Gastrocnemius medialis (tissue), 4 donors: ENCODE measurements at regions of chr10 and their contacts with region 1.

Region 1: DNA sequence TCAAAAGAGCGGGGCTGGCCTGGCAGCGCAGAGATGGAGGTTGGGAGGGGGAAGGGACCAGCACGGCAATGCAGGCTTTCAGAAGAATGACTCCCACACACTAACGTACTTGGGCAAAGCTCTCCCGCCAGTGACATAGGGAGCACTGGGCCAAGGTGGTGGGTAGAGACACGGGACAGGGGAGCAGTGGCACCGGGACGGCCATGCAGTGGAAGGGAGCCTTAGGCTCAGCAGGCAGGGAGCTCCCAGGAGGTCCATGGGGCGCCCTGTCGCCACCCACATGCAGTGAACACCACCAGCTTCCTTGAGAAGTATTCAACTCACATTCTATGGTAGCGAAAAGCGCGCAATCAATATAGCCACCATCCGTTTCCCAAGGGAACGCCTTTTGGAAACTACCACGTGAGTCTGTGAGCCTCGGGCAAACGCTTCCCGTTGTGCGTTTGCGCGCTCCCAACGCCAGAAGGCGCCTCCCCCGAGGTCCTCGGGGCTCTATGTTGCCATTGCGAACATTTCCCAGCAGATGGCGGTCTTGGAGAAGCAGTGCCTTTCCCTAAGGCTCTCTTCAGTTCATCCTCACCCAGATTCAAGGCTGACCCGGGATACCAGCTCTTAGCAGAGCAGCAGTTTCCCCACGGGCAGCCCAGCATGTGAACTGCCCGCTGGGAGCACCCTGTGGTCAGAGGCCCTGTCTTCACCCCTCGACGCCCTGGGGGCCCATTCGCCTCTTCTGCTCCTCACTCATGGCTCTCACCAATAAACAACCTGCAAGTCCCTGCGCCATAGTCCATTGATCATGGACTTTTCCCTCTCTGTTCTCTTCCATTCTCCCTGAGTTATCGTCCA is 16.4 kb upstream of the OPALIN start:
- DNase-seq: peak; percentile 61 to 77
- ATAC-seq: peak; percentile 97
- H3K4me3 ChIP-seq: peak overlapping the region; percentile 38 to 71 (median 52)
- H3K27ac ChIP-seq: no peak overlapping the region
- H3K4me1 ChIP-seq: peaks cover 0 to 6% of the 10 kb centered on the region in 2 donors
- H3K27me3 ChIP-seq: no peaks in the 10 kb centered on the region
- CTCF ChIP-seq: peak; percentile 74 to 95 (median 85)
- POLR2A ChIP-seq: no peak

Region 2: DNA sequence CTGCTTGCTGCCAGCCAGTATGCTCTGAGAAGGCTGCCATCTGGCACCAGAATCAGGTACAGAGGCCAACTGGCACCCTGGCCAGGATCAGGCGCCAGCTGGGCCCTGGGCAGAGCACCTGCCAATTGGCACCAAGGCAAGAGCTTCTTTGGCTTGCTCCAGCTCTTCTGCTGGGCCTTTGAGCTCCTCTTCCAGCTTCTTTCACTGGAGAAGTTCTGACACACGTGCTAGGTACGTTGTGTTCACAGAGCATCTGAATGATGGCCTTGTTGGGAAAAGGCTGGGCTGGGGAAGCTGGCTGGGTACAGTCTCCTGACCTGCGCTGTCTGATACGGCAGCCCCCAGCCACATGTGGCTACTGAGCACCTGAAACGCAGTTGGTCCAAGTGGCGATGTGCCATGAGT is 15.3 kb after region 1 on chr10:
- in situ Hi-C with region 1: no loop called
- intact Hi-C with region 1: loop called (anchors 2 kb)
- DNase-seq: peak; percentile 77 to 92
- ATAC-seq: peak; percentile 98 to 100
- H3K4me3 ChIP-seq: no peak overlapping the region
- H3K27ac ChIP-seq: peak overlapping the region in 3 of 4 donors; percentile 42 to 64 (median 53)
- H3K4me1 ChIP-seq: peaks cover 8 to 16% of the 10 kb centered on the region in 2 donors
- H3K27me3 ChIP-seq: no peaks in the 10 kb centered on the region
- CTCF ChIP-seq: no peak
- POLR2A ChIP-seq: no peak

Region 3: DNA sequence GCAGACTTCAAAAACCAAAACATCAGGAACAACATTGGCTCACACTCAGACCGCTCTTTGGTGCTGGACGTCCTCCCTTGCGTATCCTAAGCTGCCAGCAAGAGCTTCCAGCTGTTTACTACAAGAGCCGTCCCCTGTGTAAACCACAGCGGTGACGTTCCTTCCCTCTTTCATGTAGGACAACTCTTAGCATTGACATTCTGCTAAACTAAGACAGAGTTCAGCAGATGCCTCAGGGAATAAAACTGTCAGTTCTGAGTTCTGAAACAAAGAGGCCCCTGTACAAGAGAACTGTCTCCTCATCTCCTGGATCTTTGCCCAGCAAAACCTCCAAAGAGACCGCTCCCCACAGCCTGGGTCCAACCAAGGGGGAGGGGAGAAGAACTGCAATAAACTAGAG is 41.4 kb after region 1 on chr10:
- in situ Hi-C with region 1: no loop called
- intact Hi-C with region 1: no loop called
- DNase-seq: peak; percentile 38 to 57
- ATAC-seq: peak; percentile 78 to 81
- H3K4me3 ChIP-seq: no peak overlapping the region
- H3K27ac ChIP-seq: no peak overlapping the region
- H3K4me1 ChIP-seq: peaks cover 8 to 14% of the 10 kb centered on the region in 2 donors
- H3K27me3 ChIP-seq: peaks cover 0 to 4% (median 2%) of the 10 kb centered on the region in 3 donors
- CTCF ChIP-seq: no peak
- POLR2A ChIP-seq: no peak

Region 4: GRCh38 chr10:96470116-96470743 is 95.0 kb after region 1 on chr10:
- in situ Hi-C with region 1: no loop called
- intact Hi-C with region 1: no loop called
- DNase-seq: no peak
- ATAC-seq: peak in 1 of 2 donors; percentile 39
- H3K4me3 ChIP-seq: no peak overlapping the region
- H3K27ac ChIP-seq: no peak overlapping the region
- H3K4me1 ChIP-seq: no peaks in the 10 kb centered on the region
- H3K27me3 ChIP-seq: no peaks in the 10 kb centered on the region
- CTCF ChIP-seq: peak in 3 of 5 experiments; percentile 12 to 36 (median 27)
- POLR2A ChIP-seq: no peak

Region 5: GRCh38 chr10:96513698-96514561 is 138.7 kb after region 1 on chr10 and contains the start of gene TLL2:
- in situ Hi-C with region 1: loop called in 2 of 4 experiments (anchors 10 to 25 kb)
- intact Hi-C with region 1: loop called (anchors 1 kb)
- DNase-seq: peak; percentile 76 to 81
- ATAC-seq: peak; percentile 84 to 88
- H3K4me3 ChIP-seq: peak within 1 kb of the TSS; percentile 61 to 73 (median 66)
- H3K27ac ChIP-seq: peak within 1 kb of the TSS; percentile 39 to 61 (median 58)
- H3K4me1 ChIP-seq: peaks cover 13 to 26% of the 10 kb centered on the region in 2 donors
- H3K27me3 ChIP-seq: no peaks in the 10 kb centered on the region
- CTCF ChIP-seq: peak; percentile 59 to 87 (median 85)
- POLR2A ChIP-seq: peak in 1 of 2 donors; percentile 56
- total RNA-seq, gene TLL2: 0.10 to 1.0 (median 0.44) TPM in 3 of 4 donors, not detected in the other

Region 6: DNA sequence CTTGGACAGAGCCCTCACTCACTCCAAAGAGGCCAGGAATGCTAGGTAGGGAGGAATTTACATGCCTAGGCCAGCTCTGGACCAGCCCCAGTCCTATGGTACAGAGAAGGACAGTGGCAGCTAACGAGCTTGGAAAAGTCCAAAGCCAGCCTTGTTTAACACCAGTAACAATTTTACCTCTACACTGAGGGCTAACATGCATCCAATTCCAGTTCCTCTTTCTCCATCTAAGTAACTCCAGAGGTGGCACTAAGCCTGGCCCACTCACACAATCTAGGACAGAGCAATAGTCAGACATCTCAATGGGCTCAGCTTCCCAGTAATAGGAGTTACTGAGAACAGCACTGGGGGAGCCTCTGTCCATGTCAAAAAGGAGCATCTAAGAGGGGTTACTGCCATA is 451.2 kb after region 1 on chr10:
- in situ Hi-C with region 1: loop called in 1 of 4 experiments (anchors 10 kb)
- intact Hi-C with region 1: loop called (anchors 5 kb)
- DNase-seq: no peak
- ATAC-seq: no peak
- H3K4me3 ChIP-seq: no peak overlapping the region
- H3K27ac ChIP-seq: no peak overlapping the region
- H3K4me1 ChIP-seq: peaks cover 4 to 7% of the 10 kb centered on the region in 2 donors
- H3K27me3 ChIP-seq: no peaks in the 10 kb centered on the region
- CTCF ChIP-seq: no peak
- POLR2A ChIP-seq: no peak

Region 7: DNA sequence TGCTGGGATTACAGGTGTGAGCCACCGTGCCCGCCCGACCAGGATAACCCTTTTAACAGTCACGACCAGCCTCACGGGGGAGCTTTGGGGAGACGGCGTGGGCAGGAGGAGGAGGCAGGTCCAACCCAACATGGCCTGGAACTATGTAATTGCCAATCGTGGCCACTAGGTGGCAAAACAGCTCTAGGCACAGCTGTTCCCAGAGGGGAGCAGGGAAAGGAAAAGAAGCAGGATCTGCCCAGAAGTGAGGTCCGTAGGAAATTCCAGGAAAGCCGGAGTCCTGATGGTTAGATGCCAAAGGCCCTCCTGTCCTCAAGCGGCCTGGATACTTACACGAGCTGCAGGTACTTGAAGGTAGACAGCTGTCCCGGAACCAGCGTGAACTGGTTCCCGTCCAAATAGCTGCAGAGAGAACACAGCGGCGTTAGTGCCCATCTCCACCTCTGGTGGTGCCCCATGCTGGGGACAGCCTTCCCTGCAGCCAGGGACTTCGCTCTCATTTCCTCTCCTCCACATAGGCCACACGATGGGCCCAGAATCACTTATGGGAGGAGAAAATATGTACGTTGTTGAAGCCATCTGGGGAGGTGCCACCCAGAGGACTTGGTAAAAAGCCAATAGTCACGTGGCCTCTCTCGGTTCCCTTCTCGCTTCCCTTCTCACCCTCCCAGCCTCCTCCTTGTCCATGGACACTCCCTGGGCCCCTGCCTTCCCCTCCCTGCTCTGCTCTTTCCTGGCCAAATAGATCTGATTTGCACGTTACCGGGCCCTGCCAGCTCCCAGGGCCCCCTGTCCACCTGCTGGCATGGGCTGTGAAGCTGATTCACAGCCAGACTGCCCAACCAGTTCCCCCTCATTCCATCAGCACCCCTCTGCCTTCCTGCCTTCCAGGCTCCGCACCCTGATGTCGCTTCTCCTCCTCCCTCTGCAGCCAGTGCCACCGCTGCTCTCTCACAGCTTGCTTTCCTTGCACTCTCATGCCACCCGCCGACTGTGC is 662.5 kb after region 1 on chr10:
- in situ Hi-C with region 1: loop called in 2 of 4 experiments (anchors 25 kb)
- intact Hi-C with region 1: no loop called
- DNase-seq: peak; percentile 40 to 59
- ATAC-seq: peak; percentile 84 to 94
- H3K4me3 ChIP-seq: peak overlapping the region; percentile 40 to 80 (median 55)
- H3K27ac ChIP-seq: no peak overlapping the region
- H3K4me1 ChIP-seq: peaks cover 3 to 6% of the 10 kb centered on the region in 2 donors
- H3K27me3 ChIP-seq: no peaks in the 10 kb centered on the region
- CTCF ChIP-seq: peak; percentile 73 to 93 (median 84)
- POLR2A ChIP-seq: no peak

Region 8: GRCh38 chr10:97210543-97210961 is 835.3 kb after region 1 on chr10:
- in situ Hi-C with region 1: loop called in 1 of 4 experiments (anchors 25 kb)
- intact Hi-C with region 1: loop called (anchors 10 kb)
- DNase-seq: peak; percentile 20 to 53
- ATAC-seq: peak; percentile 66 to 81
- H3K4me3 ChIP-seq: no peak overlapping the region
- H3K27ac ChIP-seq: no peak overlapping the region
- H3K4me1 ChIP-seq: no peaks in the 10 kb centered on the region
- H3K27me3 ChIP-seq: no peaks in the 10 kb centered on the region
- CTCF ChIP-seq: peak; percentile 81 to 95 (median 88)
- POLR2A ChIP-seq: no peak